ENCODE measurements at regions of chr9 and their contacts with region 1.

Region 1: DNA sequence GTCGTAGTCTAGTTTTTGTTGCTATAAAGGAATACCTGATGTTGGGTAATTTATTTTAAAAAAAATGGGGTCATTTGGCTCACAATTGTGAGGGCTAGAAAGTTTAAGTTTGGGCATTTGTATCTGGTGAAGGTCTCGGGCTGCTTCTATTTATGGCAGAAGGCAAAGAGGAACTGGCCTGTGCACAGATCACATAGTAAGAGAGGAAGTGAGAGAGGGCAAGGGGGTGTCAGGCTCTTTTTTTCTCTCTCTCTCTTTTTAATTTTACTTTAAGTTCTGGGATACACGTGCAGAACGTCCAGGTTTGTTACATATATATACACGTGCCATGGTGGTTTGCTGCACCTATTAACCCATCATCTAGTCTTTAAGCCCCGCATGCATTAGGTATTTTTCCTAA is 453.3 kb downstream of the DIRAS2 start:
- DNase-seq: peak; percentile 74
- ATAC-seq: peak; percentile 98
- H3K4me3 ChIP-seq: peak overlapping the region in 2 of 5 experiments; percentile 12 to 63
- H3K4me3 Mint-ChIP-seq: peak overlapping the region; percentile 70
- H3K27ac ChIP-seq: peak overlapping the region; percentile 42 to 68
- H3K27ac Mint-ChIP-seq: peak overlapping the region; percentile 74
- H3K4me1 ChIP-seq: peaks cover 27 to 33% of the 10 kb centered on the region in 2 donors
- H3K4me1 Mint-ChIP-seq: peaks cover 56% of the 10 kb centered on the region
- H3K27me3 ChIP-seq: no peaks in the 10 kb centered on the region
- H3K27me3 Mint-ChIP-seq: no peaks in the 10 kb centered on the region
- CTCF ChIP-seq: no peak

Region 2: GRCh38 chr9:90201766-90202165 is 12.5 kb after region 1 on chr9:
- CTCF ChIA-PET with region 1: interaction called, 5 read pairs
- POLR2A ChIA-PET with region 1: interaction called, 17 read pairs
- intact Hi-C with region 1: no loop called
- DNase-seq: no peak
- ATAC-seq: no peak
- H3K4me3 ChIP-seq: no peak overlapping the region
- H3K4me3 Mint-ChIP-seq: no peak overlapping the region
- H3K27ac ChIP-seq: no peak overlapping the region
- H3K27ac Mint-ChIP-seq: no peak overlapping the region
- H3K4me1 ChIP-seq: peaks cover 18 to 20% of the 10 kb centered on the region in 2 donors
- H3K4me1 Mint-ChIP-seq: peaks cover 21% of the 10 kb centered on the region
- H3K27me3 ChIP-seq: no peaks in the 10 kb centered on the region
- H3K27me3 Mint-ChIP-seq: no peaks in the 10 kb centered on the region
- CTCF ChIP-seq: no peak